Gastrocnemius medialis (tissue), 4 donors: ENCODE measurements at regions of chr1 and their contacts with region 1.

Region 1: DNA sequence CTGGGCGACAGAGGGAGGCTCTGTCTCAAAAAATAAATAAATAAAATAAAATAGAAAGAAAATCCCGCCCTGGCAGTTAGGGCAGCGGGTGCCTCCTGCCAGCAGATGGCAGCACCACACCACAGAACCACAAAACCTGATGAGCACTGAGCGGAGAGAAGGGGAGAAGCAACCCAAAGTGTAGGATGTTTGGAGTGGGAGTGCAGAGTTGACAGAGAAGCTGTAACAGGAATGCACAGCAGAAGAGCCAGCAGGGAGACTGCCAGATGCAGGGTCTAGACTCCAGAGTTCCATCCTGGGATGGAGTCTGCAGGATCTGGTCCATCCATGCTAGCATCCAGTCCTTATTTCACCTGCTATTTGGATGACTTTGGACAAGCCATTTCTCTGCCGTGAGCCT is 29.7 kb upstream of the KIRREL1 start:
- DNase-seq: peak; percentile 4 to 23
- ATAC-seq: peak; percentile 44 to 54
- H3K4me3 ChIP-seq: no peak overlapping the region
- H3K27ac ChIP-seq: no peak overlapping the region
- H3K4me1 ChIP-seq: peaks cover 0 to under 1% of the 10 kb centered on the region in 2 donors
- H3K27me3 ChIP-seq: peaks cover 0 to 8% (median 8%) of the 10 kb centered on the region in 3 donors
- CTCF ChIP-seq: peak; percentile 38 to 87 (median 78)
- POLR2A ChIP-seq: no peak

Region 2: DNA sequence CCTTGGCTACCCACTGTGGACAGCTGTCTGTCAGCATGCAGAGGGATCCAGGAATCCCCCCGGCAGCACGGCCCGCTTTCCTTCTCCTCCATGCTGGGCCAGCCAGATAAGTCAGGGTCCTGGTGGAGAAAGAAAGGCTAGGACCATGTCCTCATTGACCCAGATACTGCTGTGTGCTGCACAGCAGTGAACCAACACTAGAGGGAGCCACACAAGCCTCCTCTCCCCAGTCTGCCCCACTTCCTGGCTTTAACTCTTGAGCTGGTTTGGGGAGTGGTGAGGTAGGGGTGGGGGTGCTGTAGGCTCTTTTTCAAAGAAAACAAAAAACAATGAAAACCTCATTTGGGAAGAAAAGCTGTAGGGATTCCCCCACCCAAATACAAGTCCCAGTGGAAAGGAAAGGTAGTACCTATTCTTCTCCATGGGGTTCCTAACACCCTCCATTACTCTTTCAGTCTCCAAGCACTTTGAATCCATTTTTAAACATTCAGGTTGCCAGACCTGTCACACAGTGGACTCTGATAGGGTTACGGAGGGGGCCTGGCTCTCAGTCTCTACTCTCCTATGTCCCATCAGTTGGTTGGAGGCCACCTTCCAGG is 132.1 kb after region 1 on chr1:
- in situ Hi-C with region 1: loop called in 1 of 4 experiments (anchors 10 kb)
- intact Hi-C with region 1: no loop called
- DNase-seq: no peak
- ATAC-seq: peak in 1 of 2 donors; percentile 32
- H3K4me3 ChIP-seq: no peak overlapping the region
- H3K27ac ChIP-seq: no peak overlapping the region
- H3K4me1 ChIP-seq: no peaks in the 10 kb centered on the region
- H3K27me3 ChIP-seq: no peaks in the 10 kb centered on the region
- CTCF ChIP-seq: peak; percentile 25 to 64 (median 48)
- POLR2A ChIP-seq: no peak